Uterus (tissue), 4 donors: ENCODE measurements at regions of chr12 and their contacts with region 1.

Region 1: GRCh38 chr12:124767066-124767821 is 96.4 kb downstream of the SCARB1 start:
- DNase-seq: peak; percentile 80 to 86
- H3K4me3 ChIP-seq: no peak overlapping the region
- H3K27ac ChIP-seq: peak overlapping the region; percentile 79
- H3K4me1 ChIP-seq: peaks cover 5 to 17% of the 10 kb centered on the region in 2 donors
- H3K27me3 ChIP-seq: no peaks in the 10 kb centered on the region
- CTCF ChIP-seq: peak; percentile 96 to 99 (median 97)
- POLR2A ChIP-seq: no peak

Region 2: GRCh38 chr12:124044809-124045321 is 722.4 kb before region 1 on chr12:
- intact Hi-C with region 1: loop called (anchors 5 kb)
- DNase-seq: no peak
- H3K4me3 ChIP-seq: no peak overlapping the region
- H3K27ac ChIP-seq: no peak overlapping the region
- H3K4me1 ChIP-seq: no peaks in the 10 kb centered on the region
- H3K27me3 ChIP-seq: no peaks in the 10 kb centered on the region
- CTCF ChIP-seq: no peak
- POLR2A ChIP-seq: no peak

Region 3: DNA sequence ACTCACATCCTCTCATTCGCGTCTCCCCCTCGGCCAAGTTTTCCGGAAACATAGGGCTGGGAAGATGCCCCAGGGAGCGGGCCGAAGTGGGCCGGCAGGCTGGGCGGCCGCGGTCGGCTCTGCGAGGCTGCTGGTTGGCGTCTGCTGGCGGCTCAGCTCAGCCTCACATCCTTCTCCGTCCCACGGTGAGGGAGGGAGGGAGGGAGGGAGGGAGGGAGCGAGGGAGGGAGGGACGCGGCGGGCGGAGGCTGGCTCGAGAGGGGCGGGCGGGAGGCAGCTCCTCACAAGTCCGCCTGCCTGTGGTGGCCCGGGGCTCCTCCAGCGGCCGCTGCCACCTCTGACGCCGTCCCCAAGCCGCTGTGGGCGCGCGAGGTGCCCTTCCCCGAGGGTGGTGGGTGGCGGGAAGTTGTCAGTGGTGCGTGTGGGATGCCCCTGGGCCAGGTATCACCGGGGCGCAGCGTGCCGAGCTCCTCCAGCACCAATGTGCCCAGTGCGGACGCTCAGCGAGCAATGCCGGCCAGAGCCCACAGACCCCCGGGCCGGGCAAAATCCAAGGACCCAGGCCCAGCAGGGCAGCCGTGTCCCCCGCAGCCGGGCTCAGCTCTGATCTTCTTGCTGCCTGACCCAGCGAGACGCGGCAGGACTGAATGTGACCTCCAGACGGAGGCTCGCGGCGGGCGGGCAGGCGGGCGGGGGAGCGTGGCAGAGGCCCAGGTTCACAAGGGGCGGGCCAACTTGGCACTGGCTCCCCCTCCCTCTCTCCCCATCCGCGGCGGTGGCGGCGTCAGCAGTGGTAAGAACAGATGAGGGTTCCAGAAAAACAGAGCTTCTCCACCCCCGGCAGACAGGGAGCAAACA is 378.3 kb before region 1 on chr12:
- intact Hi-C with region 1: loop called (anchors 10 kb)
- DNase-seq: peak; percentile 87 to 89
- H3K4me3 ChIP-seq: peak overlapping the region; percentile 41 to 42
- H3K27ac ChIP-seq: peak overlapping the region; percentile 87 to 90
- H3K4me1 ChIP-seq: peaks cover 22 to 49% of the 10 kb centered on the region in 2 donors
- H3K27me3 ChIP-seq: no peaks in the 10 kb centered on the region
- CTCF ChIP-seq: no peak
- POLR2A ChIP-seq: peak in 1 of 2 donors; percentile 52

Region 4: GRCh38 chr12:124567661-124568373 is 199.4 kb before region 1 on chr12:
- intact Hi-C with region 1: loop called (anchors 10 kb)
- DNase-seq: peak; percentile 94 to 97
- H3K4me3 ChIP-seq: peak overlapping the region; percentile 31 to 37
- H3K27ac ChIP-seq: peak overlapping the region; percentile 92 to 96
- H3K4me1 ChIP-seq: peaks cover 0 to 20% of the 10 kb centered on the region in 2 donors
- H3K27me3 ChIP-seq: no peaks in the 10 kb centered on the region
- CTCF ChIP-seq: peak in 3 of 4 experiments; percentile 6 to 21 (median 21)
- POLR2A ChIP-seq: no peak

Region 5: GRCh38 chr12:124964836-124965462 is 197.7 kb after region 1 on chr12:
- intact Hi-C with region 1: no loop called
- DNase-seq: no peak
- H3K4me3 ChIP-seq: no peak overlapping the region
- H3K27ac ChIP-seq: no peak overlapping the region
- H3K4me1 ChIP-seq: no peaks in the 10 kb centered on the region
- H3K27me3 ChIP-seq: no peaks in the 10 kb centered on the region
- CTCF ChIP-seq: no peak
- POLR2A ChIP-seq: no peak